ENCODE measurements at regions of chr4 and their contacts with region 1.

Region 1: DNA sequence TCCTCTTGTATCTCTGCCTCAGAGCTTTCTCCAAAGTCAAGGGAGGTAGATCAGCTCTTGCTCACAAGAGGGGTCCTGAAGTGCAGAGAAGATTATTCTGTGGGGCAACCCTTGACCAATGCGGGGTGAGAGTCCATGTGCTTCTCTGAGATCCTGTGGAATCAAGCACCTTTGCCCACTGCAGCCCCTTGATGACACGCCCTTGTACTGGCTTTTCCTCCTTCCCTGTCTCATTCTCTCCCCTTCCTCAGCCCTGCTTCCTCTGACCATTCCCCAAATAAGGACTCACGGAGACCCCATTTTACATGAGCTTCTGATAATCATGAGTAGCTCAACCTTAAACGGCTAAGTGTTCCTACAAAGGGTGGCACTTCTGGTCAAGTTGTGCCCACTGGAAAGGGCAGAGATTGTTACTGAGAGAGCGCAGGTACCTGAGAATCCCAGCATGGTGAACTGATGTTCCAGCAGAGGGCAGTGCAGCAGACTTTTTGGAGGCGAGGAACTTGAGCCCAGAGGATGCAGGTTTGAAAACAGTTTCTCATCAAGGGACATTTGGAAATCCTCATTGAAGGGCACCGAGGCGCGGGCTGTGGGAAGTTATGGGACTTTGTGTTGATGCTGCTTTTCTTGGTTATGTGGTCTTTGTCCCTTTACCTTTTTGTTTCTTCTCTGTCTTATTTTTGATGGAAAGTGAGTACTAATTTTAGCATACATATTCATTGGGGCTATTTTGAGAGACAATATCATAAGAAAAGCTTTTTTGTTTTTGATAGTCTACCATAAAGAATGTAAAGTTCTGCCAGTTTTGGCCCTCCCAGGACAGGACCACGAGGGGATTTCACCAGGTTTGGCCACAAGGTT is 201.3 kb downstream of the RBM46 start:
- DNase-seq: peak; percentile 56
- H3K4me3 ChIP-seq: no peak overlapping the region
- H3K27ac ChIP-seq: no peak overlapping the region
- H3K4me1 ChIP-seq: no peaks in the 10 kb centered on the region
- H3K27me3 ChIP-seq: no peaks in the 10 kb centered on the region
- CTCF ChIP-seq: peak; percentile 49 to 58 (median 54)
- EP300 ChIP-seq: no peak
- POLR2A ChIP-seq: no peak

Region 2: DNA sequence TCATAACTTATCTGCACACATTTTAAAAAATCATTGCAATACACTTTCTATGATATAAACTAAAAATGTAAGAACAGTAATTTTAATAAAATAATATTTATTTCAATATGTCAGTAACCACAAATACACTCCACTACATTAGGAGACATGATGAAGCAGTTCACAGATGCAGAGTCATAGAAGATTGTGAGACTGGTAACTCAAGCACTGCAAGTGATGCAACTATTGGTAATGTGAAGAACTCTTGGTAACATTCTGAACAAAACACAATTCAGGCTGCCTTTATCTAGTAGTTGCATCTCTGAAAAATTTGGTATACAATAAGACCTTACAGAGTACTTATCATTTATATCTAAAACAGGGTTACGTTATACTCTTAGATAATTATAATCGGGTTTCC is 291.2 kb before region 1 on chr4:
- in situ Hi-C with region 1: no loop called
- intact Hi-C with region 1: no loop called
- DNase-seq: no peak
- H3K4me3 ChIP-seq: no peak overlapping the region
- H3K27ac ChIP-seq: no peak overlapping the region
- H3K4me1 ChIP-seq: no peaks in the 10 kb centered on the region
- H3K27me3 ChIP-seq: no peaks in the 10 kb centered on the region
- CTCF ChIP-seq: no peak
- EP300 ChIP-seq: no peak
- POLR2A ChIP-seq: no peak

Region 3: DNA sequence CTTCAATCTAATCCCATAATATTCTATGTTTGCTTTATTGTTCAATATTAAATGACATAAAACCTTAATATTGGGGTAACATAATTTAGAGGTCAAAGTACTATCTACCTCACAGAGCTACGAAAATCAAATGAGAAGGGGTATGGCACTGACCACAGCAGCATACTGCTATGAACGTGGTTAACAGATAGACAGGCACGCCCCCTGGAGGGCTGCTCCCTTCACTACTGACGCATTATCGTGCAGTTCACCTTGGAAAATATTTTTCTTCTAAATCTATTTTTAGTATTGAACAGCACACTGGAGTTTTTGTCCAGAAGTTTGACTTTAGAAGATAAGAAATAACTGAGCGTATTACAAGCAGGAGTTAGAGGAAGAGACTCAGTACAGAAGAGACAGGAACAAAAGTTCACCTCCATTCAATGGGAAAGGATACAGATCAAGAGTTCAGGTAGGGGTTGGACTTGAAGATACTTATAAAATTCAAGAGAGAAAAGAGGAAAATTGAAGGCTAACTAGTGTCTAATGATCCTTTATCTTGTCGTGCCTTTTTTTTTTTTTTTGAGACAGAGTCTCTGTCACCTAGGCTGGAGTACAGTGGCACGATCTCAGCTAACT is 371.6 kb after region 1 on chr4:
- in situ Hi-C with region 1: loop called in 3 of 4 experiments (anchors 25 kb)
- intact Hi-C with region 1: no loop called
- DNase-seq: peak; percentile 64
- H3K4me3 ChIP-seq: no peak overlapping the region
- H3K27ac ChIP-seq: no peak overlapping the region
- H3K4me1 ChIP-seq: no peaks in the 10 kb centered on the region
- H3K27me3 ChIP-seq: no peaks in the 10 kb centered on the region
- CTCF ChIP-seq: peak; percentile 55 to 75 (median 62)
- EP300 ChIP-seq: no peak
- POLR2A ChIP-seq: no peak

Measured in transverse colon (tissue), 4 donors.